ENCODE measurements at regions of chr1 and their contacts with region 1.

Region 1: GRCh38 chr1:229832695-229833094 is 206.6 kb downstream of the URB2 start:
- DNase-seq: no peak
- ATAC-seq: no peak
- H3K4me3 ChIP-seq: no peak overlapping the region
- H3K27ac ChIP-seq: no peak overlapping the region
- H3K4me1 ChIP-seq: no peaks in the 10 kb centered on the region
- H3K27me3 ChIP-seq: peaks cover 55% of the 10 kb centered on the region
- CTCF ChIP-seq: no peak

Region 2: GRCh38 chr1:229924639-229925038 is 91.9 kb after region 1 on chr1:
- CTCF ChIA-PET with region 1: no interaction called
- POLR2A ChIA-PET with region 1: interaction called, 48 read pairs
- intact Hi-C with region 1: no loop called
- DNase-seq: no peak
- ATAC-seq: no peak
- H3K4me3 ChIP-seq: no peak overlapping the region
- H3K27ac ChIP-seq: no peak overlapping the region
- H3K4me1 ChIP-seq: no peaks in the 10 kb centered on the region
- H3K27me3 ChIP-seq: peaks cover 66% of the 10 kb centered on the region
- CTCF ChIP-seq: no peak

Measured in PC-3 (cell line).